H1 (cell line): ENCODE measurements at regions of chr9 and their contacts with region 1.

Region 1: DNA sequence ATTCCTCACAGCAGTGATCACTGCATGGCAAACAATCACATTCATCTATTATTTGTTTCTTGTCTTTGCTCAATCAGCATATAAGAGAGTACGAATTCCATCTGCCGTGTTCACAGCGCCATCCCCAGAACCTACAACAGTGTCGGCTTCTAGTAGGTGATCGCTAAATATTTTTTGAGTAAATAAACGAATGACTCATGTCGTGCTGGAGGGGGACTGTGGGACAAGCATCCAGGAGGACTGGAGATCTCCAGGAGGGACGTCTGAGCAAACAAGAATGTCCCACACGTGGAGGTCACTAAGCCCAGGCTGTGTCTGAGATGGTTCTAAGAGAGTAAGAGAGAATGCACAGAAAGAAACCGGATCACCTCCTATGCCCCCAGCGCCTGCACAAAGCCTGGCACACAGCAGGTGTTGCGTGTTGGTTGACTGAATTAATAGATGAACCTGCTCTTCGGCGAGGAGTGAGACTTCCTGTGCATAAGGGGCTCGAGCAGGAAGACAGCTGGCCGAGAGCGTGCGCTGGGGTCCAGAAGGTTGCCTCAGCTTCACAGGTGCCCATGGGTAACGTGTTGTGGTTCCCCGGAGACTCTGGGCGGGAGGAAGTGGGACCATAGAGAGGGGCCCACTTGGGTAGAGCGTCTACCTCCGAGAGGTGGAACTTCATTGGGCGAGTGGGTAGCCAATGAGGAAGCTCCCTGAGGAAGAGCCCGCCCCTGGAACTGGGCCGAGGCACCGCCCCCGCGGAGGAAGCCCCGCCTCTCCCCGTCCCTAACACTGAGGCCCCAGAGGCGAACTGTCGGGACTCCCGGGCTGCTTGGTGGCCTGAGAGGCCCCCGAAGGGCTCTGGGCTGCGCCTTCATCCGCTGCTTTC is 193.0 kb downstream of the MELK start:
- DNase-seq: peak; percentile 38 to 94
- H3K4me3 ChIP-seq: peak overlapping the region; percentile 66 to 73 (median 70)
- H3K27ac ChIP-seq: no peak overlapping the region
- H3K4me1 ChIP-seq: peaks cover 0 to 8% (median 2%) of the 10 kb centered on the region in 4 experiments; a peak in 3 of 7 replicates
- H3K27me3 ChIP-seq: peaks cover 0 to 12% (median 2%) of the 10 kb centered on the region in 4 experiments; a peak in 4 of 7 replicates
- CTCF ChIP-seq: no peak
- EP300 ChIP-seq: peak in 1 of 2 experiments; percentile 17; a peak in 1 of 3 replicates
- POLR2A ChIP-seq: peak in 1 of 2 experiments; percentile 63; a peak in 2 of 3 replicates
- RAD21 ChIP-seq: no peak

Region 2: GRCh38 chr9:36689805-36690204 is 75.9 kb before region 1 on chr9:
- CTCF ChIA-PET with region 1: no interaction called
- POLR2A ChIA-PET with region 1: no interaction called
- DNase-seq: no peak
- H3K4me3 ChIP-seq: no peak overlapping the region
- H3K27ac ChIP-seq: no peak overlapping the region
- H3K4me1 ChIP-seq: no peaks in the 10 kb centered on the region
- H3K27me3 ChIP-seq: no peaks in the 10 kb centered on the region
- CTCF ChIP-seq: no peak
- EP300 ChIP-seq: no peak
- POLR2A ChIP-seq: no peak
- RAD21 ChIP-seq: no peak

Region 3: GRCh38 chr9:36748322-36748899 is 17.3 kb before region 1 on chr9:
- CTCF ChIA-PET with region 1: no interaction called
- POLR2A ChIA-PET with region 1: interaction called, 13 read pairs
- DNase-seq: peak in 1 of 2 experiments; percentile 82
- H3K4me3 ChIP-seq: no peak overlapping the region
- H3K27ac ChIP-seq: no peak overlapping the region
- H3K4me1 ChIP-seq: no peaks in the 10 kb centered on the region; a peak in 1 of 7 replicates
- H3K27me3 ChIP-seq: no peaks in the 10 kb centered on the region; a peak in 2 of 7 replicates
- CTCF ChIP-seq: no peak
- EP300 ChIP-seq: no peak
- POLR2A ChIP-seq: no peak
- RAD21 ChIP-seq: peak in 1 of 2 experiments; percentile 14; a peak in 1 of 4 replicates

Region 4: DNA sequence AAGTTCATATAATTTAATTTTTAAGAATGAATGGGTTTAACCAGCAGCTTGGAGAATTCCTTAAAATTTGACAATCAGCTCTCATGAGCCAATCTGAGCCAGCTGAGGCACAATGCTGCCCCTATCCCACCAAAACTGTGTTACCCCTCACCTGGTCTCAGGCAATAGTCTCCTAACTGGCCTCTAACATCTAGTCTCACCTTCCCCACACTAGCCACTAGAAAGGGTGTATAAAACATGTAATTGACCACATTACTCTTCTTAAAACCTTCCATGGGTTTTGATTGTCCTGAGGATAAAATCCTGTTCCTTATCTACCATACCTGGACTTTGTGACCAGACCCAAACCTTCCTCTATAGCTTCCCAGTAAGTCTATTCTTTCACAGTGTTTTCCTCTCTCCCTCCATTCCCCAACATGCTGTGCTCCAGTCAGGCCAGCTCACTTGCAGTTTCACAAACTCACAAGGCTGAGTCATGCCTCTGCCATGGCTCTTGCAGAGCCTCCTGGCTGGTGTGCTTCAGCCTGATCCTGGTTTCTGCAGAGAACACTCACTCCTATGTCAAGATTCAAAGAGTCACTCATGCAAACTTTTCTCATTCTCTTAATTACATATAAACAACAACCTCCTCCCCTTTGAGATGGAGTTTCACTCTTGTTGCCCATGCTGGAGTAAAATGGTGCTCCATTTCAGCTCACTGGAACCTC is 338.6 kb after region 1 on chr9:
- CTCF ChIA-PET with region 1: no interaction called
- POLR2A ChIA-PET with region 1: no interaction called
- DNase-seq: no peak
- H3K4me3 ChIP-seq: no peak overlapping the region
- H3K27ac ChIP-seq: no peak overlapping the region
- H3K4me1 ChIP-seq: peaks cover 0 to 6% (median 0%) of the 10 kb centered on the region in 4 experiments; a peak in 2 of 7 replicates
- H3K27me3 ChIP-seq: no peaks in the 10 kb centered on the region
- CTCF ChIP-seq: no peak
- EP300 ChIP-seq: no peak
- POLR2A ChIP-seq: no peak
- RAD21 ChIP-seq: no peak